ENCODE measurements at regions of chr9 and their contacts with region 1.

Region 1: DNA sequence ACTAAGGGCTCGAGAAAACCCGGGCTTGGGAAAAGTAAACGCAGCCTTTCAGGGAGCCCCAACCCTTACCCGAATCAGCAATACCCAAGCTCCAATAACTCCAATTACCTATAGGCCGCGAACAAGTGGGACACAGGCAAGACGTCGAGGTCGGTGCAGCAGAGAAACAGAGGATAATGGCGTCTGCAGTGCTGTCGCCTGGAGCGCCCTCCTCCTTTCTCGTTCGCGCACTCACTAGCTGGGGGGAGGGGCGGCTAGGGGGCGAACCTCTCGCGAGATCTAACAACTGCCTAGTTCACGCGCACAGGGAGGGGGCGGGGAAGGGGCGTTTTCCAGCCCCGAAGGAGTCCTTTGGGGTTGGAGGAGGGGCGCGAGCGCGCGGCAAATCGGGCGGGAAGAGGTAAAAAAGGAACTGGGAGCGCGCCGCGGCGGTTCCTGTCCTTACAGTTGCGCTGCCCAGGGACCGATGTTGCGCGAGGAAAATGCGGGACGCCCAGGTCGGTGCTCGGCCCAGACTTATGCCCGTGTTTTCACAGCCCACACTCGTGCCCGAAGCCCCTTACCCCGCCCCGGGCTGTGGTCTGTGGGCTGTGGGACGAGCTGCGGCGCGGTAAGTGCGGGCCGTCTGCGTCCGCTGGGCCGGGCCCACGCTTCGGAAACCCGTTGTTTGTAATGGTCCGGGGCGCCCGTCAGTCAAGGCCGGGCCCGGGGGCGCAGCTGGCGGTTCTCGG is at the start of gene RMI1:
- DNase-seq: peak; percentile 99
- H3K4me3 Mint-ChIP-seq: peak within 1 kb of the TSS; percentile 96
- H3K27ac Mint-ChIP-seq: peak within 1 kb of the TSS; percentile 99
- H3K4me1 Mint-ChIP-seq: peaks cover 43% of the 10 kb centered on the region
- H3K27me3 Mint-ChIP-seq: no peaks in the 10 kb centered on the region
- total RNA-seq, gene RMI1: 20.3 to 22.6 TPM

Region 2: GRCh38 chr9:83622939-83623678 is 357.5 kb before region 1 on chr9 and contains the start of gene IDNK:
- CTCF ChIA-PET with region 1: no interaction called
- POLR2A ChIA-PET with region 1: interaction called, 3 read pairs
- intact Hi-C with region 1: loop called (anchors 1 kb)
- DNase-seq: peak; percentile 76
- H3K4me3 Mint-ChIP-seq: peak within 1 kb of the TSS; percentile 77
- H3K27ac Mint-ChIP-seq: peak within 1 kb of the TSS; percentile 93
- H3K4me1 Mint-ChIP-seq: peaks cover 26% of the 10 kb centered on the region
- H3K27me3 Mint-ChIP-seq: no peaks in the 10 kb centered on the region
- total RNA-seq, gene IDNK: 4.4 to 5.0 TPM

Region 3: DNA sequence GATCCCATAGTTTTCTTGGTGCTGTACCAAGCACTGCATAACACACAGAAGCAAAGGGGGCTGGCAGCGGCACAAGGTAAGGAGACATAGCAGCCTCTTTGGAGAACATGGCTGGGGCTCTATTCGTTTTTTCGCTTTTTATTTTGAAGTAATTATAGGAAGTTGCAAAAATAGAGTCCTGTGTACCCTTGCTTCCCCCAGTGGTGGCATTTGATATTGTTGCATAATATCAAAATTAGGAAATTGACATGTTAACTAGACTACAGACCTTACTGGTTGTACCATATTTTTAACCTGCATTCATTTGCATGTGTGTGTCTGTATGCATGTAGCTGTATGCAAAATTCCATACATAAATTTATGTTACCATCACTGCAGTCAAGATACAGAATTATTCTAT is 266.2 kb before region 1 on chr9:
- CTCF ChIA-PET with region 1: no interaction called
- POLR2A ChIA-PET with region 1: no interaction called
- intact Hi-C with region 1: no loop called
- DNase-seq: no peak
- H3K4me3 Mint-ChIP-seq: no peak overlapping the region
- H3K27ac Mint-ChIP-seq: no peak overlapping the region
- H3K4me1 Mint-ChIP-seq: peaks cover 2% of the 10 kb centered on the region
- H3K27me3 Mint-ChIP-seq: no peaks in the 10 kb centered on the region

Region 4: DNA sequence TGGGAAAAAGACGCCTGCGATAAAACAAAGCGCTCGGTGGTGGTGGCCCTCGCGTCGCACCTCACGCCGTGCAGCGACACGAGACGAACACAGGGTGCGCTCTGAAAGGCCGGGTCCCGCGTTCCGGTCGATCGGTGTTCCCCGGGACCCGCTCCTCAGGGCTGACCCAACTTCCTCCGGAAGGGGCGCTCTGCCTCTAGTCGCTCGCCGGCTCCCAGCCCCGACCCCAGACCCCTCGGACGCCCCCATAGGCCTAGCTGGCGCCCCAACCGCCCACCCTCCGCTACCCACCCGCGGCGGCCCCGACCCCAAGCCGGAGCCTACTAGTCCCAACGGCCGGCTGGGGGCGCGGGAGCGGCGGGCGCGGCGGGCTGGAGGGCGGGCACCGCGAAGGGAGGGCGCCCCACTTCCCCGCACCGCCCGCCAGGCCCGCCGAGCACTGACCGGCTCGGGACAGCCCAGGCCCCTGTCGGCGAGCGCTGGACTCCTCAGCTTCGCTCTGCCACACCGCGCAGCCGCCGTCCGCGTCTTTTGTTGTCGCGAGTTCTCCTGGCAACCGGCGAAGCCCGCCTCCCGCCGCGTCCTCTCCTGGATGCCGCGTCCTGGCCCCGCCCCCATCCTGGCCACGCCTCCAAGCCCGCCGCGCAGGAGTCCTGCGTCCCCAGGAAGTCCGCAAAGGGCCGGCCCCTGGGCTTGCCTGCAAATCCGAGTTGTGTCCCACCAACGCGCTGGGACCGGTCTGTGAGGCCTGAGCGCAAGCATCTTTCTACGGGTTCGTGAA is 59.4 kb before region 1 on chr9 and contains the start of gene KIF27:
- CTCF ChIA-PET with region 1: interaction called, 12 read pairs
- POLR2A ChIA-PET with region 1: interaction called, 18 read pairs
- intact Hi-C with region 1: loop called (anchors 1 kb)
- DNase-seq: peak; percentile 99
- H3K4me3 Mint-ChIP-seq: peak within 1 kb of the TSS; percentile 80
- H3K27ac Mint-ChIP-seq: peak within 1 kb of the TSS; percentile 91
- H3K4me1 Mint-ChIP-seq: peaks cover 10% of the 10 kb centered on the region
- H3K27me3 Mint-ChIP-seq: no peaks in the 10 kb centered on the region
- total RNA-seq, gene KIF27: 2.6 to 3.0 TPM

Region 5: DNA sequence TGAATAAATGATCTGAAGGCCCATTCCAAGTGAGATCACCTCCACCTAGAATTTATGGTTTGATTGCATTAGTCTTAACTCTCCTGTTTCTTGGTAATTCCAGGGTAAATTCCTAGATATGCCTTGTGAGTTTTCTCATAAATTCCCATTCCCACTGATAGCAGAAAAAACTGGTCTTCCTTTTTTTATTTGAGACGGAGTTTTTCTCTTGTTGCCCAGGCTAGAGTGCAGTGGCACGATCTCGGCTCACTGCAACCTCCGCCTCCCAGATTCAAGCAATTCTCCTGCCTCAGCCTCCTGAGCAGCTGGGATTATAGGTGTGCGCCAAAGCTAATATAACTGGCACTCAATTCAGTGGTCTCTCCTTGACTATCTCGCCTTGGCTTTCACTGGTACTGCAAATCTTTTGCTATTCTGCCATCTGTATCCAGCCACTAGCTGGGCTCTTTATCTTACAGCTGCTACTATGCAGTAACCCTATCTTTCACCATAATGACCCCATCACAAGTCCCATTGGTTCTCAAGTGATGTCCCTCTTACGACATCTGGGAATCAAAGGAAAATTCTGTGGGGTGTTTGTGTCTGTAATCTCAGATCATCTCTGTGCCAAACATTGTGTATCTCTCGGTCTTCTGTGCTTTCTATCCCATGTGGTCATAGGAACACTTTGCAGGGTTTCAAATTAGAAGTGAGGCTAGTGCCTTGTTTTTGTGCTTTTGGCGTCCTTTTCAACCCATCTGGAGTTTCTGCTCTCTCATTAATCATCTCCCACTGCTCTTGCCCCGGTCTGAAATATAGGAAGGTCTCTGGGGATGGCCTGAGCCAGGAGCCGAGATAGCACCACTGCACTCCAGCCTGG is 15.0 kb before region 1 on chr9:
- CTCF ChIA-PET with region 1: interaction called, 4 read pairs
- POLR2A ChIA-PET with region 1: interaction called, 13 read pairs
- intact Hi-C with region 1: no loop called
- DNase-seq: no peak
- H3K4me3 Mint-ChIP-seq: no peak overlapping the region
- H3K27ac Mint-ChIP-seq: peak overlapping the region; percentile 70
- H3K4me1 Mint-ChIP-seq: peaks cover 11% of the 10 kb centered on the region
- H3K27me3 Mint-ChIP-seq: no peaks in the 10 kb centered on the region

Region 6: GRCh38 chr9:84296146-84296843 is 315.7 kb after region 1 on chr9:
- CTCF ChIA-PET with region 1: interaction called, 5 read pairs
- POLR2A ChIA-PET with region 1: interaction called, 22 read pairs
- intact Hi-C with region 1: loop called (anchors 1 kb)
- DNase-seq: peak; percentile 78
- H3K4me3 Mint-ChIP-seq: peak overlapping the region; percentile 49
- H3K27ac Mint-ChIP-seq: peak overlapping the region; percentile 98
- H3K4me1 Mint-ChIP-seq: peaks cover 58% of the 10 kb centered on the region
- H3K27me3 Mint-ChIP-seq: no peaks in the 10 kb centered on the region

Measured in activated CD4-positive, alpha-beta memory T cell treated with anti-CD3 and anti-CD28 coated beads for 36 hours (primary cell).